Calu3 (cell line): ENCODE measurements at regions of chr5 and their contacts with region 1.

Region 1: DNA sequence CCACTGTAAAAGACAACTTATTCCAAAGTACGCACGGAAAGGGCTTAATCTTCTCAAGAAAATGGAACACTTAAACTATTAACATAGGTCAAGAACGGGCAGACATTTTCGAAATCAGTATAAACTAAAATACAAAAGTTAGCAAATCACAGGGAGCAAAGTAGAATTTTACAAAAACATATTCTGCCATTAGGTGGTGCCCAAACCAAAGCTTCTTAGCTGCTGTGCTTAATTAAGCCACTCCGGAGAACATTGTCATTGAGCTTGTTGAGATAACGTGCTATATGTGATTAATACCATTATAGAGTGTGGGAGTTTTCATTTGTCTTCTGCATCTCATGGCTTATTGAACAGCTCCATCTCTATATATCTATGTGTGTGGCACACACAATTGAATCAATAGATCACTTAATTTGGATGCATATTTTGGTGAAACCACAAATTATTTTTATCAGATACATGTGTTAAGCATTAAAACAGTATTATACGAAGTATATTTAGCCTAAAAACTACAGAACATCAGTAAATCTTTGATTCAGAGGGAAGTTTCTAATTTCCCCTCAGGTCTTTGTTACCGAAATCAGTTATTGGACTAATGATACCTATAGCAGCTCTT is 23.4 kb downstream of the UBLCP1 start:
- DNase-seq: peak; percentile 11
- H3K4me3 Mint-ChIP-seq: no peak overlapping the region
- H3K27ac Mint-ChIP-seq: no peak overlapping the region
- H3K4me1 Mint-ChIP-seq: no peaks in the 10 kb centered on the region
- H3K27me3 Mint-ChIP-seq: no peaks in the 10 kb centered on the region
- CTCF ChIP-seq: no peak

Region 2: GRCh38 chr5:159316519-159317383 is 30.2 kb after region 1 on chr5:
- CTCF ChIA-PET with region 1: interaction called, 10 read pairs
- intact Hi-C with region 1: loop called (anchors 1 kb)
- DNase-seq: peak; percentile 57
- H3K4me3 Mint-ChIP-seq: no peak overlapping the region
- H3K27ac Mint-ChIP-seq: no peak overlapping the region
- H3K4me1 Mint-ChIP-seq: no peaks in the 10 kb centered on the region
- H3K27me3 Mint-ChIP-seq: peaks cover 53% of the 10 kb centered on the region
- CTCF ChIP-seq: peak; percentile 74